Lower leg skin (tissue), 4 donors: ENCODE measurements at regions of chr9 and their contacts with region 1.

Region 1: GRCh38 chr9:136605988-136606660 is 56.6 kb upstream of the EGFL7 start:
- DNase-seq: no peak
- H3K4me3 ChIP-seq: no peak overlapping the region
- CTCF ChIP-seq: no peak
- POLR2A ChIP-seq: no peak

Region 2: GRCh38 chr9:136587145-136587943 is 18.8 kb before region 1 on chr9:
- intact Hi-C with region 1: loop called (anchors 2 kb)
- DNase-seq: peak in 1 of 2 donors; percentile 46
- H3K4me3 ChIP-seq: no peak overlapping the region
- CTCF ChIP-seq: no peak
- POLR2A ChIP-seq: no peak

Region 3: DNA sequence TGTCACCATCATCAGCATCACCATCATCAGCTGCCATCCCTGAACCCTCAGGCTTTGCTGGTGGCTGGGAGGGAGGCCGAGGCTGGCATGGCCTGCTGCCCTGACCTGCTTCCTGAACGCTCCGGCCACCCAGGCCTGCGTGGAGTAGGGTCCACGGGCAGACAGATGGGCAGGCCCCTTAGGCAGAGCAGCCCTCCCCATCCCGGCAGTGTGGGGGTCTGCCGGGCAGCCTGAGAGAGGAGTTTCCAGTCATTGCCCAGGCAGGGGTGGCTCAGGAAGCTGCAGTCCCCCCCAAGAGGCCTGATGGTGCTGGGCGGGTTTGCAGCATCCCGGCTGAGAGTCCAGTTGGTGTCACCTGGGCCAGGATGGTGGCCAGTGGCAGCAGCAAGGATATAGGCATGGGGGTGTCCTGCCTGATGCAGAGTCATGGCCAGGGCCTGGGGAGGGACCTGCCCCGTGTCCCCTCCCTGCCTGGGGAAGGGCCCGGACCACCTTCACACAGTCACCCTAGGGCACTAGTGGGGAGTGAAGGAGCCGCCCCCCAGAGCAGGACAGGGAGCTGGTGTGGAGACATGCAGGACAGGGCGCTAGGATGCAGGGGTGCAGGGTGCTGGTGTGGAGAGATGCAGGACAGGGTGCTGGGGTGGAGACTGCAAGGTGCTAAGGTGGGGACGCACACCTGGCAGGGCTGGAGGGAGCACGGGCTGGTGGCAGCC is 48.9 kb after region 1 on chr9:
- intact Hi-C with region 1: no loop called
- DNase-seq: no peak
- H3K4me3 ChIP-seq: no peak overlapping the region
- CTCF ChIP-seq: no peak
- POLR2A ChIP-seq: no peak

Region 4: DNA sequence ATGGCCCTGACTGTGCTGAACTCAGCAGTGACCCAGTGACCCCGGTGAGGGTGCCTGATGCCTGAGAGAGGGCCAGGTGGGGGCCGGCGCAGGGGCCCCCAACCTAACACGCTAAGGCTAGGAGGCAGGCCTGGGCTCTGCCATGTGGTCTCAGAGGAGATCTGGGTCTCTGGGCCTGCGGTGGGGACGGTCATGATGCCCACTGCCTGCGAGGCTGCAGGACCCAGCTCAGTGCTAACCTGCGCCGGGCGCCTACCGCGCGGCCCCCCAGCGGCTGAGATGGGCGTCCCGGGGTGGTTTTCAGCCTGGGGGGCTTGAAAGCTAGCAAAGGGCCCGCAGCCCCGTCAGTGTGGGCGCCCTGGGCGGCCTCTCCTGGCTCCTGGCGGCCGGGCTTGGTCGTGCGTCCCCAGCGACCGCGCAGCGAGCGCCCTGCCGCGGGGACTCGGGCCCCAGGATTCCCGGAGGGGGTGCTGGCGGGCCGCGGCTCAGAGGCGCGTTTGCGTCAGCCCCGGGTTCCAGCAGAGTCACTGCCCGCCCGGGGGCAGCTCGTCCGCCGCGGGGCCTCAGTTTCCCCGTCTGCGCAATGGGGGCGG is 59.1 kb after region 1 on chr9:
- intact Hi-C with region 1: no loop called
- DNase-seq: no peak
- H3K4me3 ChIP-seq: peak overlapping the region; percentile 20
- CTCF ChIP-seq: no peak
- POLR2A ChIP-seq: no peak